ENCODE measurements at regions of chr6 and their contacts with region 1.

Region 1: DNA sequence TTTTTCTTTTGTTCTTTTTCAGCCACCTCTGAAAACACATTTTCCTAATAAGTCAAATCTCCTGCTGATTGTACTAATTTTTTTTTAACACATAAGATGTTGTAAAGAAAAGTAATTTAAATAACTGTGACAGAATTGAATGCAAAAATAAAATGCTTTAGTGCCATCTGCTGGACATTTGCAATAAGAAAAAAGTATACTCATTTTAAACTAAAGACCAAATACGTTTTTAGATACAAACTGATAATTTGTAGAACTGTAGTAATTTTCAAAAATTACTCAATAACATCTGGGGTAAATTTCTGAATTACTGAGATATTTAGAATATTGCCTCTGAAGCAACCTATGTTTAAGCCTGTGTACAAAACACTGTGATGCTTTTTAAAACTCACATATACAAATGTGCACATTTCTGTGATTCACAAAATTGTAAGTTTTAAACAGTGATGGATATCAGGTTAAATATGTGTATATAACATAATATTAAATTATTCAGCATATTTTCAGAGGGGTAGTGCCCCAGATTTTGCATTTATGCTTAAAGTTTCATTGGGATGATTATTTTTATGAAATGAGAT is 198.7 kb downstream of the RIMS1 start:
- DNase-seq: peak in 1 of 9 experiments; percentile 2
- ATAC-seq: no peak
- H3K4me3 ChIP-seq: no peak overlapping the region
- H3K4me3 Mint-ChIP-seq: no peak overlapping the region
- H3K27ac ChIP-seq: no peak overlapping the region
- H3K27ac Mint-ChIP-seq: no peak overlapping the region
- H3K4me1 ChIP-seq: no peaks in the 10 kb centered on the region
- H3K4me1 Mint-ChIP-seq: no peaks in the 10 kb centered on the region
- H3K27me3 ChIP-seq: no peaks in the 10 kb centered on the region
- H3K27me3 Mint-ChIP-seq: no peaks in the 10 kb centered on the region
- CTCF ChIP-seq: no peak

Region 2: DNA sequence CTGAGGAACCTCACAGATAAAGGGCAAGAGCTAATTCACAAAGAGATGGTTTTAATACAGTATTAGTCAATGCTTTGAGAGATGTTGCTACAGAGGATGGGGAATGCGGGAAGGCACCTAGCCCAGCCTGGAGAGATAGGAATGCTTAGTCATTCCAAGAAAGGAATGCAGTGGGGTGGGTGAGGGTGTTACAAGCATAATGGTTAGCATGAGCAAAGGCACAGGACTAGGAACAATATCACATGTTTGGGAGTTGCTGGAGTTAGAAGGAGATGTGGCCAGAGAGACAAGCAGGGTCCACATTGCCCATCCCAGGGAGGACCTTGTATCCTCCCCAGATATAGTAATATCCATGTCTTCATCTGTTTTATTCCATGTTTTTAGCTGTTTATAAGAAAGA is 903.5 kb before region 1 on chr6:
- CTCF ChIA-PET with region 1: no interaction called
- POLR2A ChIA-PET with region 1: no interaction called
- intact Hi-C with region 1: loop called in 1 of 2 experiments (anchors 10 kb)
- DNase-seq: no peak
- ATAC-seq: no peak
- H3K4me3 ChIP-seq: no peak overlapping the region
- H3K4me3 Mint-ChIP-seq: no peak overlapping the region
- H3K27ac ChIP-seq: no peak overlapping the region
- H3K27ac Mint-ChIP-seq: no peak overlapping the region
- H3K4me1 ChIP-seq: no peaks in the 10 kb centered on the region
- H3K4me1 Mint-ChIP-seq: no peaks in the 10 kb centered on the region
- H3K27me3 ChIP-seq: no peaks in the 10 kb centered on the region
- H3K27me3 Mint-ChIP-seq: peaks cover 29% of the 10 kb centered on the region
- CTCF ChIP-seq: no peak

Region 3: GRCh38 chr6:71383901-71384489 is 701.1 kb before region 1 on chr6:
- CTCF ChIA-PET with region 1: no interaction called
- POLR2A ChIA-PET with region 1: no interaction called
- intact Hi-C with region 1: loop called (anchors 5 to 10 kb)
- DNase-seq: peak in 2 of 9 experiments; percentile 7 to 14
- ATAC-seq: no peak
- H3K4me3 ChIP-seq: no peak overlapping the region
- H3K4me3 Mint-ChIP-seq: no peak overlapping the region
- H3K27ac ChIP-seq: no peak overlapping the region
- H3K27ac Mint-ChIP-seq: no peak overlapping the region
- H3K4me1 ChIP-seq: no peaks in the 10 kb centered on the region
- H3K4me1 Mint-ChIP-seq: no peaks in the 10 kb centered on the region
- H3K27me3 ChIP-seq: no peaks in the 10 kb centered on the region
- H3K27me3 Mint-ChIP-seq: peaks cover 5% of the 10 kb centered on the region
- CTCF ChIP-seq: peak; percentile 43

Region 4: GRCh38 chr6:71621918-71622519 is 463.1 kb before region 1 on chr6:
- CTCF ChIA-PET with region 1: no interaction called
- POLR2A ChIA-PET with region 1: no interaction called
- intact Hi-C with region 1: no loop called
- DNase-seq: no peak
- ATAC-seq: no peak
- H3K4me3 ChIP-seq: no peak overlapping the region
- H3K4me3 Mint-ChIP-seq: no peak overlapping the region
- H3K27ac ChIP-seq: no peak overlapping the region
- H3K27ac Mint-ChIP-seq: no peak overlapping the region
- H3K4me1 ChIP-seq: no peaks in the 10 kb centered on the region
- H3K4me1 Mint-ChIP-seq: no peaks in the 10 kb centered on the region
- H3K27me3 ChIP-seq: no peaks in the 10 kb centered on the region
- H3K27me3 Mint-ChIP-seq: no peaks in the 10 kb centered on the region
- CTCF ChIP-seq: no peak

Region 5: DNA sequence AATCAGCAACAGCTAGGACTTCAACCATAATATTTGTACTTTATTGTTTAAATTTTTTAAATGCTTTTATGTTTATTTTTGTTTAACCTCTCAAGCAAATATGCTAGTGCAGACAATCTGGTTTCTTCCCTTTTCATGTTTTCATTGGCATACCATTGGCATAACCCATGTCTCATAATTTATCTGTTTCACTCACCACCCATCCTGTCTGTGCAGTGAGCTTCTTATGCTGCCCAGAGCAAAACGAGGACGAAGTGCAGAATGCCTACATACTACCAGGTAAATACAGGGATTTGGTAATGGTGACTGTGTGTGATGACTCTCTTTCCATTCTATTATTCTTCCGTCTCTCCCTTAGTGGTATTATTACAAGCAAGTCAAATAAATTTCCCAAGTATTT is 175.4 kb after region 1 on chr6:
- CTCF ChIA-PET with region 1: no interaction called
- POLR2A ChIA-PET with region 1: no interaction called
- intact Hi-C with region 1: no loop called
- DNase-seq: no peak
- ATAC-seq: no peak
- H3K4me3 ChIP-seq: no peak overlapping the region
- H3K4me3 Mint-ChIP-seq: no peak overlapping the region
- H3K27ac ChIP-seq: no peak overlapping the region
- H3K27ac Mint-ChIP-seq: no peak overlapping the region
- H3K4me1 ChIP-seq: no peaks in the 10 kb centered on the region
- H3K4me1 Mint-ChIP-seq: no peaks in the 10 kb centered on the region
- H3K27me3 ChIP-seq: no peaks in the 10 kb centered on the region
- H3K27me3 Mint-ChIP-seq: no peaks in the 10 kb centered on the region
- CTCF ChIP-seq: no peak